Activated naive CD4-positive, alpha-beta T cell treated with anti-CD3 and anti-CD28 coated beads for 36 hours (primary cell): ENCODE measurements at regions of chr2 and their contacts with region 1.

Region 1: DNA sequence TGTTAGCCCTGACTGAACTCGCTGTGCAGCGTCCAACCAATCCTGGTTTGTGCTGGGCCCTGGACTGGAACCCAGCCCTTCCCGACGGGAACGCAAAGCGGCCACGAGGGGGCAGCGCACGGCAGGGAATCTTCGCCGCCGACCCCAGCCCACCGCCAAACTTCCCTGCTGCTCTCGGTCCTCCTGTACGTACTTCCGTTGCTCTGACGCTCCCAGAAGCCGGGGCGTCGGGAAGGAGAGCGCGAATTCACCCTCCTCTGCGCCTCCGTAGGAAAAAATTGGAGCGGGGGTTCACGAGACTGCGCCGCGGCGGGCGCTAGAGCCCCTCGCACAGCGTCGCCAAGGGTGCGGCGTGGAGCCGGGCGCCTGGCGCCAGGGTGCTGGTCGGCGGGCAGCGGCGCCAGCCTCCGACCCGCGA is 948 bp upstream of the SH3RF3 start:
- DNase-seq: peak; percentile 81
- H3K4me3 Mint-ChIP-seq: peak overlapping the region; percentile 76
- H3K27ac Mint-ChIP-seq: no peak overlapping the region
- H3K4me1 Mint-ChIP-seq: peaks cover 42% of the 10 kb centered on the region
- H3K27me3 Mint-ChIP-seq: peaks cover 6% of the 10 kb centered on the region

Region 2: DNA sequence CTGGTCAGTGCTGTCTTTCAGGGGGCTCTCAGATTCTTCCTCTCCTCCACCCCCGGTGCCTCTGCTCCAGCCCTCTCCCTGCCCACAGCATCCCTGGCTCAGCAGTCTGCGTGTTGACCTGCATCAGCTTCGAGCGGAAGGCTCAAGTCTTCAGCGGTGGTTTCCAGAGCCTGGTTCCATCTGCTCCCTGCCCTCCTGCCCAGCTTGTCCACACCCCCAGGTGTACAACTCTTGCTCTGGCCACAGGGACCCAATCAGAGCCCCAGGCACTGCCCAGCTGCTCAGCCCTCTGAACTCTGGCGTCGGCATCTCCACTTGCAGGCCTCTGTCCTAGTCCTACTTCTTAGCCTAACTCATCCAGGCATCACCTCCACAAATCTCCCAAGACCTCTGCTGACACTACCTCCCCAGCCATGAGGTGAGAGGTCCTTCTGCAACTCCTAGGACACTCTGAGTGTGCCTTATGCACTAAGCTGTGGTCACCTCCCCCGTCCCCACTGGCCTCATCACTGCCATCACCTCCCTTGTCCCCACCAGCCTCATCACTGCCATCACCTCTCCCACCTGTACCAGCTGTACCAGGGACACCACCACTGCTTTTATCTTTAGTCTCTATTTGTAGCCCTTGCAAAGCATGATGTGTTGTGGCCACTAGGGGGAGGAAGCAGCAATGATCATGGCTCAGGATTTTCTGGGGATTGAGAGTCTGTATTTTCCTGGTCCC is 200.0 kb before region 1 on chr2:
- CTCF ChIA-PET with region 1: interaction called, 3 read pairs
- intact Hi-C with region 1: loop called (anchors 5 kb)
- DNase-seq: peak; percentile 66
- H3K4me3 Mint-ChIP-seq: no peak overlapping the region
- H3K27ac Mint-ChIP-seq: no peak overlapping the region
- H3K4me1 Mint-ChIP-seq: no peaks in the 10 kb centered on the region
- H3K27me3 Mint-ChIP-seq: no peaks in the 10 kb centered on the region

Region 3: GRCh38 chr2:108995588-108995987 is 132.5 kb before region 1 on chr2:
- CTCF ChIA-PET with region 1: no interaction called
- intact Hi-C with region 1: no loop called
- DNase-seq: no peak
- H3K4me3 Mint-ChIP-seq: no peak overlapping the region
- H3K27ac Mint-ChIP-seq: no peak overlapping the region
- H3K4me1 Mint-ChIP-seq: peaks cover 14% of the 10 kb centered on the region
- H3K27me3 Mint-ChIP-seq: no peaks in the 10 kb centered on the region

Region 4: GRCh38 chr2:109117780-109118179 is 10.3 kb before region 1 on chr2:
- CTCF ChIA-PET with region 1: no interaction called
- intact Hi-C with region 1: no loop called
- DNase-seq: no peak
- H3K4me3 Mint-ChIP-seq: no peak overlapping the region
- H3K27ac Mint-ChIP-seq: no peak overlapping the region
- H3K4me1 Mint-ChIP-seq: peaks cover 11% of the 10 kb centered on the region
- H3K27me3 Mint-ChIP-seq: no peaks in the 10 kb centered on the region

Region 5: GRCh38 chr2:109143214-109144187 is 15.4 kb after region 1 on chr2:
- CTCF ChIA-PET with region 1: interaction called, 3 read pairs
- intact Hi-C with region 1: loop called (anchors 1 kb)
- DNase-seq: peak; percentile 90
- H3K4me3 Mint-ChIP-seq: no peak overlapping the region
- H3K27ac Mint-ChIP-seq: no peak overlapping the region
- H3K4me1 Mint-ChIP-seq: peaks cover 40% of the 10 kb centered on the region
- H3K27me3 Mint-ChIP-seq: peaks cover 8% of the 10 kb centered on the region

Region 6: GRCh38 chr2:109213646-109214417 is 85.8 kb after region 1 on chr2:
- CTCF ChIA-PET with region 1: interaction called, 4 read pairs
- intact Hi-C with region 1: loop called (anchors 1 kb)
- DNase-seq: peak; percentile 78
- H3K4me3 Mint-ChIP-seq: peak overlapping the region; percentile 49
- H3K27ac Mint-ChIP-seq: peak overlapping the region; percentile 54
- H3K4me1 Mint-ChIP-seq: peaks cover 70% of the 10 kb centered on the region
- H3K27me3 Mint-ChIP-seq: peaks cover 70% of the 10 kb centered on the region

Region 7: DNA sequence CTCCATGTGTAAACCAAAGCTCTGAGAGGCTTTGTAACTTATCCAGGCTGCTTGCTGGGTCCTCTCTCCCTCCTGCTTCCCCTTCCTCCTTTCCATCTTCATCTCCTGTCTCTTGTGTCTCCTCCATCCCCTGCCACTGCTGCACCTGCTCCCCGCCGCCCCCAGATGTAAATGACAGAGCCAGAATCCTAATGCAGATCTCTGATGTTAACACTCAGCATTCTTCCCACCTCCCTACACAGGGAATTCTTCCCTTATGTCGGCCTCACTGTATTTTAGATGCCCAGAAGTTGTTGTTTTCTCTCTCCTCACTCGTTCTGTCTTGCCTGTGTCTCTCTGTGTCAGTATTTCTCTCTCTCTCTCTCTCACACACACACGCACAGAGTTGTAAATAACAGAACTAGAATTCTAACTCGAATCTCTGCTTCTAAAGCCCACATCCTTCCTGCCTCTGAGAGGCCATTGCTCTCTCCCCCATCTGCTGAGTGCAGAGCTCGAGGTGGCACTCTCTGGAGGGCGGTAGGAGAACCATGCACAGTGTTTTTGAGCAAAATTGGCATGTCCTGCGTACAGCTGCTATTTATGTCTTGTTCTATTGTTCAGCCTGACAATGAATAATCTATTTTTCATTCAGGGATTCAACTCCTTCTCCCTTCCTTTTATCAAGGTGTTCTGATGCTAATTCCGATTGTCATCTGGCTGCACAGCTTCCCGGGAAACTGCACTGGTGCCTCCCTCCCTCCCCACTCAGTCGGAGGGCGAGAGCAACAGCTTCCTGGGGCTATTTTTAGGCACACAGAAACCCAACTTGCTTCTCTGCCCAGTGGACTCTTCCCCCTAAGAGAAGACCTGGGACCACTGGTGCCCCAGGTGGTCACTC is 220.9 kb after region 1 on chr2:
- CTCF ChIA-PET with region 1: interaction called, 4 read pairs
- intact Hi-C with region 1: loop called (anchors 1 kb)
- DNase-seq: peak; percentile 72
- H3K4me3 Mint-ChIP-seq: peak overlapping the region; percentile 9
- H3K27ac Mint-ChIP-seq: peak overlapping the region; percentile 31
- H3K4me1 Mint-ChIP-seq: peaks cover 46% of the 10 kb centered on the region
- H3K27me3 Mint-ChIP-seq: no peaks in the 10 kb centered on the region

Region 8: DNA sequence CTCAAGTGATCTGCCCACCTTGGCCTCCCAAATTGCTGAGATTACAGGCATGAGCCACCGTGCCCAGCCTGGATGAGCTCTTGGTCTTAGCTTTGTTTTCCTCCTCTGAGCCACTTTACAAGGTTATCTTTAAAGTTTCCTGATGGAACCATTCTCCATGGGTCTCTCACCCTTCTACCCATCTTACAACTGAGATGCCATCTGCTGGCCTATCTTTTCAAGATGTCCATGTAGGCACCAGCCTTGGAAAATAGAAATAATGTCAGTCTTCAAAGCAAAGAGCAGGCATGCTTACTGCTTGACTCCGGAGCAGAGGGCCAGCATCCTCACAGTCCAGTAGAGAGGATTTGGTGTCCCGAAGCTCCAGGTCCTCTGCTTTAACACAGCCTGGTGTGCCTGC is 361.9 kb after region 1 on chr2:
- CTCF ChIA-PET with region 1: no interaction called
- intact Hi-C with region 1: loop called (anchors 5 kb)
- DNase-seq: no peak
- H3K4me3 Mint-ChIP-seq: no peak overlapping the region
- H3K27ac Mint-ChIP-seq: no peak overlapping the region
- H3K4me1 Mint-ChIP-seq: no peaks in the 10 kb centered on the region
- H3K27me3 Mint-ChIP-seq: no peaks in the 10 kb centered on the region

Region 9: GRCh38 chr2:109613922-109614714 is 486.1 kb after region 1 on chr2 and contains the starts of genes SEPTIN10 and SOWAHC:
- CTCF ChIA-PET with region 1: no interaction called
- intact Hi-C with region 1: loop called (anchors 1 kb)
- DNase-seq: peak; percentile 86
- H3K4me3 Mint-ChIP-seq: peak within 1 kb of the TSS; percentile 89
- H3K27ac Mint-ChIP-seq: no peak within 1 kb of the TSS
- H3K4me1 Mint-ChIP-seq: peaks cover 20% of the 10 kb centered on the region
- H3K27me3 Mint-ChIP-seq: peaks cover 64% of the 10 kb centered on the region
- total RNA-seq, gene SEPTIN10: 2.3 to 2.7 TPM
- total RNA-seq, gene SOWAHC: 0.38 to 0.44 TPM